B cell (primary cell): ENCODE measurements at regions of chr15 and their contacts with region 1.

Region 1: GRCh38 chr15:85330901-85331588 is 49.4 kb upstream of the AKAP13 start:
- DNase-seq: peak; percentile 82
- ATAC-seq: peak; percentile 39
- H3K4me3 ChIP-seq: peak overlapping the region in 4 of 5 experiments; percentile 49 to 81 (median 58)
- H3K4me3 Mint-ChIP-seq: peak overlapping the region; percentile 97
- H3K27ac ChIP-seq: peak overlapping the region; percentile 92 to 96
- H3K27ac Mint-ChIP-seq: peak overlapping the region; percentile 100
- H3K4me1 ChIP-seq: peaks cover 62 to 69% of the 10 kb centered on the region in 2 donors
- H3K4me1 Mint-ChIP-seq: peaks cover 66% of the 10 kb centered on the region
- H3K27me3 ChIP-seq: no peaks in the 10 kb centered on the region
- H3K27me3 Mint-ChIP-seq: no peaks in the 10 kb centered on the region
- CTCF ChIP-seq: peak; percentile 50

Region 2: DNA sequence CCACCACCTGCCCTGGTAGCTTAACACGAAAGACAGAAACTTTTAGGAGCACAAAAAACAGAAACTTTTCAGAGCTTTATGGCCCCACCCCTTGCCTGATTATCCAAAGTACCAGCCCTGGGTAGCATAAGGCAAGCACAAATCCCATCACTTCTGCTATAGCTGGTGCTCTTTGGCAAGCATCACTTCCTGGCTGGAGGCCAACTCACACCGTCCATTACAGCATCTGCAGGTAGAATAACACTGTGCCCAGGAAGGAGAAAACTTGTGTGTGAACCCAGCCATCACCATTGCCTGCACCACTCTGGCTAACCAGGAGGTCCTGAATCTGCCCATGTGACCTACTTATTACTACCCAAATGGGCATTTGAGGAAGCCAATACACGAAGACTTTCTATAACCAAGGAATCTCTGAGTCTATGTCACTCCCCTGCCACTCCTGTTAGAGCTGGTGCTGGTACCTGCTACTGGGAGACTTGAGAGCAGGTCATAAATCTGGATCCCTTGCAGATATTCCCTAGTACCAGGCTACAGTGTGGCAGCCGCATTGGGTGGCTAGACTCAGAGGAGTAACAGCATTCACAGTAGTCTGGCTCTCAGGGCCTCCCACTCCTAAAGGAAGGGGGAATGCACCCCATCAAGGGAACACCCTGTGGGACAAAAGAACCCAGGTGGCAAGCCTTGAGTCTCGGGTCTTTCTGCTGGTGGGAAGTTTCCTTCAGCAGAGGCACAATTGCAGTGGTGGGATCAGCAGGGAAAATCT is 23.9 kb before region 1 on chr15:
- CTCF ChIA-PET with region 1: interaction called, 195 read pairs
- POLR2A ChIA-PET with region 1: interaction called, 24 read pairs
- intact Hi-C with region 1: loop called (anchors 1 kb)
- DNase-seq: no peak
- ATAC-seq: peak; percentile 14
- H3K4me3 ChIP-seq: no peak overlapping the region
- H3K4me3 Mint-ChIP-seq: no peak overlapping the region
- H3K27ac ChIP-seq: no peak overlapping the region
- H3K27ac Mint-ChIP-seq: peak overlapping the region; percentile 63
- H3K4me1 ChIP-seq: peaks cover 26 to 39% of the 10 kb centered on the region in 2 donors
- H3K4me1 Mint-ChIP-seq: peaks cover 57% of the 10 kb centered on the region
- H3K27me3 ChIP-seq: no peaks in the 10 kb centered on the region
- H3K27me3 Mint-ChIP-seq: no peaks in the 10 kb centered on the region
- CTCF ChIP-seq: no peak

Region 3: GRCh38 chr15:85318048-85318731 is 12.9 kb before region 1 on chr15:
- CTCF ChIA-PET with region 1: interaction called, 195 read pairs
- POLR2A ChIA-PET with region 1: interaction called, 49 read pairs
- intact Hi-C with region 1: loop called (anchors 1 kb)
- DNase-seq: peak; percentile 42
- ATAC-seq: peak; percentile 90
- H3K4me3 ChIP-seq: no peak overlapping the region
- H3K4me3 Mint-ChIP-seq: peak overlapping the region; percentile 46
- H3K27ac ChIP-seq: peak overlapping the region; percentile 20 to 29
- H3K27ac Mint-ChIP-seq: peak overlapping the region; percentile 83
- H3K4me1 ChIP-seq: peaks cover 39 to 40% of the 10 kb centered on the region in 2 donors
- H3K4me1 Mint-ChIP-seq: peaks cover 63% of the 10 kb centered on the region
- H3K27me3 ChIP-seq: no peaks in the 10 kb centered on the region
- H3K27me3 Mint-ChIP-seq: no peaks in the 10 kb centered on the region
- CTCF ChIP-seq: peak; percentile 29

Region 4: GRCh38 chr15:85361323-85361722 is 30.3 kb after region 1 on chr15:
- CTCF ChIA-PET with region 1: no interaction called
- POLR2A ChIA-PET with region 1: no interaction called
- intact Hi-C with region 1: no loop called
- DNase-seq: no peak
- ATAC-seq: no peak
- H3K4me3 ChIP-seq: no peak overlapping the region
- H3K4me3 Mint-ChIP-seq: no peak overlapping the region
- H3K27ac ChIP-seq: no peak overlapping the region
- H3K27ac Mint-ChIP-seq: no peak overlapping the region
- H3K4me1 ChIP-seq: peaks cover 9 to 10% of the 10 kb centered on the region in 2 donors
- H3K4me1 Mint-ChIP-seq: peaks cover 25% of the 10 kb centered on the region
- H3K27me3 ChIP-seq: no peaks in the 10 kb centered on the region
- H3K27me3 Mint-ChIP-seq: no peaks in the 10 kb centered on the region
- CTCF ChIP-seq: no peak

Region 5: GRCh38 chr15:85388566-85389305 is 57.7 kb after region 1 on chr15:
- CTCF ChIA-PET with region 1: interaction called, 11 read pairs
- POLR2A ChIA-PET with region 1: interaction called, 3 read pairs
- intact Hi-C with region 1: no loop called
- DNase-seq: no peak
- ATAC-seq: no peak
- H3K4me3 ChIP-seq: peak overlapping the region in 1 of 5 experiments; percentile 13
- H3K4me3 Mint-ChIP-seq: peak overlapping the region; percentile 73
- H3K27ac ChIP-seq: no peak overlapping the region
- H3K27ac Mint-ChIP-seq: no peak overlapping the region
- H3K4me1 ChIP-seq: peaks cover 57 to 66% of the 10 kb centered on the region in 2 donors
- H3K4me1 Mint-ChIP-seq: peaks cover 33% of the 10 kb centered on the region
- H3K27me3 ChIP-seq: no peaks in the 10 kb centered on the region
- H3K27me3 Mint-ChIP-seq: no peaks in the 10 kb centered on the region
- CTCF ChIP-seq: no peak

Region 6: GRCh38 chr15:85412956-85413854 is 82.2 kb after region 1 on chr15:
- CTCF ChIA-PET with region 1: interaction called, 231 read pairs
- POLR2A ChIA-PET with region 1: interaction called, 5 read pairs
- intact Hi-C with region 1: loop called (anchors 1 kb)
- DNase-seq: peak; percentile 86
- ATAC-seq: peak; percentile 93
- H3K4me3 ChIP-seq: peak overlapping the region in 1 of 5 experiments; percentile 9
- H3K4me3 Mint-ChIP-seq: peak overlapping the region; percentile 56
- H3K27ac ChIP-seq: peak overlapping the region; percentile 13 to 72
- H3K27ac Mint-ChIP-seq: peak overlapping the region; percentile 90
- H3K4me1 ChIP-seq: peaks cover 56 to 61% of the 10 kb centered on the region in 2 donors
- H3K4me1 Mint-ChIP-seq: peaks cover 67% of the 10 kb centered on the region
- H3K27me3 ChIP-seq: no peaks in the 10 kb centered on the region
- H3K27me3 Mint-ChIP-seq: no peaks in the 10 kb centered on the region
- CTCF ChIP-seq: peak; percentile 18

Region 7: DNA sequence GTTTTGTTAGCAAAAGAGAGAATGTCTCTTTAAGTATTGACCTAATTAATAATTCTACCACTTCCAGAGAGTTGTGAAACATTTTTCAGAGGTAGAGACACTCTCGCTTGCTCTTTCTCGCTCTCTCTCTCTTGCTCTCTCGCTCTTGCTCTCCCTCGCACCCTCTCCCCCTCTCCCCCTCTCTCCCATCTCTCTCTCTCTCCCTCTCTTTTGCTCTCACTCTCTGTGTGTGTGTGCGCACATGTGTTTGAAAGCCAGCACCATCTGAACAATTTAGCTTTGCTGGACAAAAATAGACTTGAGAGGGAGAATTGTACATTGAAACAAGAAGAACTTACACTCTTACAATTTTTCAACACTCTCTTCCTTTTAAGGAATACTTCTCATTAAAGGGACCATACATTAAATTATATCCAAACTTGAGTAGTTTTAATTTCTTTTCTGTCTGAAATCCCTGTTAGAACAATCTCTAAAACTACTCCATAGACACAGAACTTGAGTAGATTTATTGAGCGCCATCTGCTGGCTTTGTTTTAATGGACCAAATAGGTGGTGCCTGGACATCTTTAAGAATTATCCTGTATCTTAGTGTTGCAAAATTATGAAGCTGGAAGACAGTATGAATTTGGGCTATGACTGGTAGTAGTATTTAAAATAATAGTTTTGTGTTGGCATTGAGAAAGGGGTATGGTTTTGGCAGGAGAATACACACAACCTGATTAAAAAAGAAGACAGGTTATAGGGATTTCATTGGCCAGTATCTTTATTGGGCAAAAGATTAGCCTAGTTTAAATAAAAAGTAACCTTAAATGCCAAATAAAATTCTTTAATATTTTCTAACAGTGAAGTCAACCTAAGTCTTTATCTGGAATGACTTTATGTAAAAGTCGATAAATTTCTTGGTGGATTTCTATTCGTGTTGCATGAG is 174.0 kb after region 1 on chr15:
- CTCF ChIA-PET with region 1: interaction called, 20 read pairs
- POLR2A ChIA-PET with region 1: no interaction called
- intact Hi-C with region 1: loop called (anchors 1 kb)
- DNase-seq: peak; percentile 71
- ATAC-seq: no peak
- H3K4me3 ChIP-seq: no peak overlapping the region
- H3K4me3 Mint-ChIP-seq: no peak overlapping the region
- H3K27ac ChIP-seq: peak overlapping the region in 1 of 2 donors; percentile 35
- H3K27ac Mint-ChIP-seq: no peak overlapping the region
- H3K4me1 ChIP-seq: peaks cover 13 to 16% of the 10 kb centered on the region in 2 donors
- H3K4me1 Mint-ChIP-seq: peaks cover 48% of the 10 kb centered on the region
- H3K27me3 ChIP-seq: no peaks in the 10 kb centered on the region
- H3K27me3 Mint-ChIP-seq: no peaks in the 10 kb centered on the region
- CTCF ChIP-seq: peak; percentile 74

Region 8: DNA sequence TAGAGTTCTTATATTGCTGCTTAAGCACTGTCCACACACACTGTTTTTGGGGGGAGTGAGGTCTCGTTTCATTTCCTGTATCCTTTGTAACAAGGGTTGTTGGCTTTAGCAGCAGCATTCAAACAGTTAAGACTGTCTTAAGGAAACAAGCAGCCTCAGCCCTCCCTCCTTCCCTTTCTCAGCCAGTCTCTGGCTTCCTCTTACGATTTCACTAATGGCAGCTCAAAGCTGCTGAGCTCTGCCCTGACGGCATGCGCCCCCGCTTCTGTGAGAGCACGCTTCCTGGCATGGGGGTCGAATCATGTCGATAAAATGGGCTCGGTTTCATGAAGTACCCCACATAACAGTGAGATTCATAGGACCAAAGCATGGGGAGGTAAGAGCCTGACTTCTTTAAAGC is 358.7 kb after region 1 on chr15:
- CTCF ChIA-PET with region 1: no interaction called
- POLR2A ChIA-PET with region 1: interaction called, 3 read pairs
- intact Hi-C with region 1: loop called (anchors 2 kb)
- DNase-seq: peak; percentile 75
- ATAC-seq: peak; percentile 68
- H3K4me3 ChIP-seq: peak overlapping the region; percentile 76 to 95 (median 81)
- H3K4me3 Mint-ChIP-seq: peak overlapping the region; percentile 98
- H3K27ac ChIP-seq: peak overlapping the region; percentile 84 to 85
- H3K27ac Mint-ChIP-seq: peak overlapping the region; percentile 98
- H3K4me1 ChIP-seq: peaks cover 68 to 70% of the 10 kb centered on the region in 2 donors
- H3K4me1 Mint-ChIP-seq: peaks cover 74% of the 10 kb centered on the region
- H3K27me3 ChIP-seq: no peaks in the 10 kb centered on the region
- H3K27me3 Mint-ChIP-seq: no peaks in the 10 kb centered on the region
- CTCF ChIP-seq: no peak